Right ventricle myocardium superior (tissue), 1 donor: ENCODE measurements at regions of chr19 and their contacts with region 1.

Region 1: DNA sequence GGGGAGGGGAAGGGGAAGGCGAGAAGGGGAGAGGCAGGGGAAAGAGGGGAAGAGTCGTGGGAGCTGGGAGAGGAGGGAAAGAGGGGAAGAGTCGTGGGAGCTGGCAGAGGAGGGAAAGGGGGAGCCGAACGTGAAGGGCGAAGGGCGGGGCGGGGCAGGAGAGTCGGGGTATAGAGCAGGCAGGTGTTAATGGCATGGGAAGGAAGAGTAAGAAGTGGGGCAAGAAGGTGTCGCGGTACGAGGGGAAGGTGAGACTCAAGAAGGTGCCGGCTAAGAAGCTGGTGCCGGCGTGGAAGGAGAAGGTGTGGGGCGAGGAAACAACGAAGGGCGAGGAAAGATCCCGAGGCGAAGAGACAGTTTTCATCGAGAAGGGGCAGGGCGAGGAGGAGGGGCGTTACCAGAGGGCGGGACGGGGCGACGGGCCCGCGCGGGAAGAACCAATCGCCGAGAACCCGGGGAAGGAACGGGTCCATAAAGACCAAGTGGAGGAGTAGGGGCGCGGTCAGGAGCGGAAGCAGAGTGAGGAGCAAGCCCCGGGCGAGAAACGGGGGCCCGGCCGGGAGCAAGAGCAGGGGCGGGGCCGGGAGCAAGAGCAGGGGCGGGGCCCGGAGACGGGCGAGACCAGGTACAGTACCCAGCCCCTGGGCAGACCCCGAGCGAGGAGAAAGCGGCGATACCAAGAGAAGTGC is 463 bp downstream of the CATSPERG start:
- DNase-seq: peak; percentile 97
- ATAC-seq: peak; percentile 95

Region 2: DNA sequence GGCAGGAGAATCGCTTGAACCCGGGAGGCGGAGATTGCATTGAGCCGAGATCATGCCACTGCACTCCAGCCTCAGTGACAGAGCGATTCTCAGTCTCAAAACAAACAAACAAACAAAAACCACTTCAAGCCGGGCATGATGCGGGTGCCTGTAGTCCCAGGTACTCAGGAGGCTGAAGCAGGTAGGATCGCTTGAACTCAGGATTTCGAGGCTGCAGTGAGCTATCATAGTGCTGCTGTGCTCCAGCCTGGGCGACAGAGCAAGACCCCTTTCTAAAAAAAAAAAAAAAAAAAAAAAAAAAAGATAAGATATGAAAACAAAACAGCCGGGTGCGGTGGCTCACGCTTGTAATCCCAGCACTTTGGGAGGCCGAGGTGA is 92.8 kb before region 1 on chr19:
- intact Hi-C with region 1: loop called (anchors 2 kb)
- DNase-seq: no peak
- ATAC-seq: no peak

Region 3: DNA sequence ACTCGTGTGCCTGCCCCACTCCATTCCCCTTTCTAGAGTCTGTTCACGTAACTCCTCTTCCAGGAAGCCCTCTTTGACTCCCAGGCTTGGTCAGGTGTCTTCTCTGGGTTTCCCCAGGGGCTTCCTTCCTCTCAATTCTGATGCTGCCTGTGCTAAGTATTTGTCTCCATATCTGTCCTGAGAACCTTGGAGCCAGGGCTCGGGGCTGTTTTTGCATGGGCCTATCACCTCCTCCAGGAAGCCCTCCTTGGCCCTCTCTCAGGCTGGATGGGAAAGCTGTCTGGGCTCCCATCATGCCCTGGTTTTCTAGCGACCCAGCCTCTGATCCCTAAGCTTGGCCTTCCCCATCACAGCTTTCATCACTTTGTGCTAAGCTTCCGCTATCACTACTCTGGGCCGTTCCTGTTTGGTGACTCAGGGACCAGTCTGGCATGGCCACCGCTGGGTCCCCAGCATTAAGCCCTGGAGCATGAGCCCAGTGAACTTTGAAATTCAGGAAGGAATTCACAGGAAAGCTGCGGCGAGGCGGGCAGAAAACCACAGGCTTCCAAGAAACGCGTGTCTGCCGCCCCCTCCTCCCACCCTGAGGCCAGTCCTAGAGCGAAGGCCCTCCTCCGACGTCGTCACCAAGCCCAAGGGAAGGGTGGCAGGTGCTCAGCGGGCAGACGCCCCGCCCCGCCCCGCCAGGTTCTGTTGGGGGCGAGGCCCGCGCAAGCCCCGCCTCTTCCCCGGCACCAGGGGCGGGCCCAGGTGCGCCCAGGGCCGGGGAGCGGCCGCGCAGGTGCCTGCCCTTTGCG is 72.2 kb before region 1 on chr19:
- intact Hi-C with region 1: no loop called
- DNase-seq: no peak
- ATAC-seq: peak; percentile 82

Region 4: DNA sequence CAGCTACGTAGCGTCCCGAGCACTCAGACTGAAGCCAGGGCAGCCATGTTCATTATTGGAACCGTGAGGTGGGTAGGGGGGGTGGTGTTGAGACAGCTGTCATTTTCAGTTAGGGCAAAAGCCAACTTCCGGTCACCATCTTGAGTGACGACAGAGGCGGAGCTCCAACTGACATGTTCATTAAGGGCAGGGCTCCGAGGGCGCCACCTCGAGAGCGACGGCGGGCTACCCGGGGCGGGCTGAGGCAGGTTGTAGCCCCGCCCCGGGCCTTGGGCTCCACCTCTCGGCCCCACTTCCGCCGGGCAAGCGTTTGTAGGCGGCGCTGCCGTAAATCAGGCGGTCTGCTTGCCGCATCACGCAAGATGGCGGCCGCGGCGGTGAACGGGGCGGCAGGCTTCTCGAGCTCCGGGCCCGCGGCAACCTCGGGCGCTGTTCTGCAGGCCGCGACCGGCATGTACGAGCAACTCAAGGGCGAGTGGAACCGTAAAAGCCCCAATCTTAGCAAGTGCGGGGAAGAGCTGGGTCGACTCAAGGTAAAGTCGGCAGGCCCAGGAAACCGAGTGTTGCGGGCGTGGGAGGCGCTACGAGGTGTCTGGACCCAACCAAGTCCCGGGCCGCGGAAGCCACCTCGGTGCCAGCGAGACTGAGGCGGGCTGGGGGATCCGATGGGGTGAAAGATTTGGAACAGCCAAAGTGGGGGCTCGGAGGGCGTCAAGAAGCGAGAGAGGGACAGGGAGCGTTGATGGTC is 38.5 kb after region 1 on chr19 and contains the start of gene PSMD8:
- intact Hi-C with region 1: loop called (anchors 2 kb)
- DNase-seq: peak; percentile 99
- ATAC-seq: peak; percentile 99
- total RNA-seq, gene PSMD8: 299 TPM

Region 5: DNA sequence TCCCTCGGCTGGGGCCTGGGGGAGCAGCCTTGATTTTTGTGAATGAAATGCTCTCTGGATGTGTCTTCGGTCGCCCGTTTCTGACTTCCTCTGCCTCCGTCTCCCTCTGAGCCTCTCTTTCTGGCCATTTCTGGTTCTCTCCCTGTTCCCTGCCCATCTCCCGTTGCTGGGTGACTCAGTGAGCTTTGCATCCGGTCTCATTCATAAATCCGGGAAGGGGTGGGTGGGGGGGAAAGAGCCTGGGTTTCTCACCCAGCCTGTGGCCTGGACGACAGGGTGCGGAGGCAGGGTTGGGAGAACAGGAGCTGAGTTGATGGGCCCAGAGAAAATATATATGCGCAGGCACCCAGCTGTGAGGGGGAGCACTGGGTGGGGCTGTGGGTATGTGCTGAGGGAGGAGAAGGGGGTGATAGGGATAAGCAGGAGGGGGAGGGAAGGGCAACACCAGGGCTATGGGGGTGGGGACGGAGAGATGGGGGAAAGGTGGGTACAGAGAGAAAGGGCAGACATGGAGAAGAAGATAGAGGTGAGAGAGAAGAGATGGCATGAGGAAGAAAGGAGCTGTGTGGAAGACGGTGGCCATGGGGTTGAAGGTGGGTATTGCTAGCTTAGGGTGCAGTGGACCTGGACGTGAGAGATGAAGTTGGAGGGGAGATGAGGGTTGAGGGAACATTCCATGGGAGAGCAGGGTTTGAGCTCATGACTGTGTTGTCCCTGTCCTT is 53.6 kb after region 1 on chr19:
- intact Hi-C with region 1: no loop called
- DNase-seq: no peak
- ATAC-seq: no peak